ENCODE measurements at regions of chr20 and their contacts with region 1.

Region 1: GRCh38 chr20:50070991-50071888 is 41.7 kb downstream of the UBE2V1 start:
- H3K4me3 ChIP-seq: peak overlapping the region; percentile 27
- H3K27ac ChIP-seq: no peak overlapping the region
- H3K4me1 ChIP-seq: no peaks in the 10 kb centered on the region
- CTCF ChIP-seq: peak; percentile 98

Region 2: DNA sequence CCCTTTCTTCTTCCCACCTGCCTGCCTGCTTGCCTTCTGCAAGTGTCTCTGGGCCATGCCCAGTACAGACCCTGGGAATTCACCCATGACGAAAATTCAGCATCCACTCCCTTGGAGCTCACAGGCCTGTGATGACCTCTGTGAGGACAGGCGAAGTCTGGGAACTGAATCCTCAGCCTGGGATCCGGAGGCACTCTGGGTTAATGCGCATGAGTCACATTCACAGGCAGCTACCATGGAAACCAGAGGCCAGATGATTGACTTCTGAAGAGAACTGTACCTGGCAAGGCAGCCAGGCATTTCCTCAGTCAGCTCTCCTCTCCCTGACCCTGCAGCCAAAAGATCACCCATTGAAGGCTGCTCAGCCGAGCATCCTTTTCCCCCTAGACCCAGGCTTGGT is 217.6 kb before region 1 on chr20:
- CTCF ChIA-PET with region 1: no interaction called
- POLR2A ChIA-PET with region 1: no interaction called
- H3K4me3 ChIP-seq: no peak overlapping the region
- H3K27ac ChIP-seq: no peak overlapping the region
- H3K4me1 ChIP-seq: no peaks in the 10 kb centered on the region
- CTCF ChIP-seq: no peak

Region 3: GRCh38 chr20:49964964-49965780 is 106.1 kb before region 1 on chr20:
- CTCF ChIA-PET with region 1: interaction called, 17 read pairs
- POLR2A ChIA-PET with region 1: no interaction called
- H3K4me3 ChIP-seq: no peak overlapping the region
- H3K27ac ChIP-seq: no peak overlapping the region
- H3K4me1 ChIP-seq: no peaks in the 10 kb centered on the region
- CTCF ChIP-seq: peak; percentile 66

Region 4: GRCh38 chr20:49989234-49990065 is 81.8 kb before region 1 on chr20:
- CTCF ChIA-PET with region 1: interaction called, 30 read pairs
- POLR2A ChIA-PET with region 1: interaction called, 7 read pairs
- H3K4me3 ChIP-seq: no peak overlapping the region
- H3K27ac ChIP-seq: no peak overlapping the region
- H3K4me1 ChIP-seq: no peaks in the 10 kb centered on the region
- CTCF ChIP-seq: no peak

Region 5: DNA sequence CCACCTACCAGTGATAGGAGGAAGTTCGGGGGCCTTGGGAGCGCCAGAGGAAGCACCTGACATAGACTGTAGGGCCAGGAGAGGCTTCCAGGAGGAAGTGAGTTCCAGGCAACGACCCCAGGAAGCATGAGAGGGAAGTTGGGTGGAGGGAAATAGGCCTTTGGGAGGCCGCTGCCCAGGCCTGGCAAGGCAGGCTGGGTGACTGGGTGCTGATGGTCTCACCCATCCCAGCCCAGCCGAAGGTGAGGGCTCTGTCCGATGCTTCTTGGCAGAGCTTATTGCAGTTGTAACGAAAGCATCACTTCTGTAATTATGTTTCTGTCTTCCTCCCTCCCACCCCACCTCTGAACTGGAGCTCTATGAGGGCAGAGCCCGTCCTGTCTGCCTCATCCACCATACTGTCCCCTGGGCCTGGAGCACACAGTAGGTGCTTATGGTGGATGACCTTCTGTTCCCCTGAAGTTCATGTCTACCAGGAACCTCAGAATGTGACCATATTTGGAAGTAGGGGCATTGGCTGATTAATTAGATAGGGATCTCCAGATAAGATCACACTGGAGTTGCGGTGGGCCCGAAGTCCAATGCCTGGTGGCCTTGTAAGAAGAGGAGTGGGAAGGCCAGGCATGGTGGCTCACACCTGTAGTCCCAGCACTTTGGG is 12.4 kb before region 1 on chr20:
- CTCF ChIA-PET with region 1: interaction called, 28 read pairs
- POLR2A ChIA-PET with region 1: no interaction called
- H3K4me3 ChIP-seq: no peak overlapping the region
- H3K27ac ChIP-seq: no peak overlapping the region
- H3K4me1 ChIP-seq: no peaks in the 10 kb centered on the region
- CTCF ChIP-seq: no peak

Region 6: GRCh38 chr20:50165684-50166554 is 94.7 kb after region 1 on chr20:
- CTCF ChIA-PET with region 1: interaction called, 10 read pairs
- POLR2A ChIA-PET with region 1: no interaction called
- H3K4me3 ChIP-seq: peak overlapping the region; percentile 22
- H3K27ac ChIP-seq: peak overlapping the region; percentile 13; the same call in 1 of the 2 replicates
- H3K4me1 ChIP-seq: no peaks in the 10 kb centered on the region
- CTCF ChIP-seq: peak; percentile 11; the same call in 1 of the 2 replicates